ENCODE measurements at regions of chrX and their contacts with region 1.

Region 1: DNA sequence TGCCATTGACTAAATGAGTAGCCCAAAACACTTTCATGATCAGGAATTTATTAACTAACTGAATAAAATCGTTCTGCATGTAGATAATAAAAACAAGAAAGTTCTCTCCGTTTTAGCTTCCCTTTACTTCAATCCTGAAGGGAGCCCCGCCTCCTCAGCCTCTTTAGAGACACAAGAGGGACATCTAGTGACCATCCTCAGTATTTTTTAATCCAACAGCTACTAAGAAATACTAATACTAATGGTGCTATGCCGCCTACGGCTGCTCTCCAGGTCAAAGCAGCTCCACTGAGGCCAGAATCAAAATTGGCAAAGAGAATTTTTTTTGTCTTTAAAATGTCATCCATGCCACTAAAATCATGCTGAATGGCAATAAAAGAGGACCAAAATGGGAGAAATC is 3.2 kb upstream of the PCDH19 start:
- DNase-seq: peak; percentile 61
- H3K4me3 ChIP-seq: no peak overlapping the region
- H3K27ac ChIP-seq: no peak overlapping the region
- H3K4me1 ChIP-seq: peaks cover 13% of the 10 kb centered on the region
- H3K27me3 ChIP-seq: peaks cover 17 to 34% of the 10 kb centered on the region in 2 experiments
- CTCF ChIP-seq: peak in 1 of 2 donors; percentile 26
- POLR2A ChIP-seq: no peak

Region 2: GRCh38 chrX:100368167-100368566 is 45.1 kb before region 1 on chrX:
- CTCF ChIA-PET with region 1: interaction called, 12 read pairs
- POLR2A ChIA-PET with region 1: no interaction called
- dilution Hi-C with region 1: no loop called
- intact Hi-C with region 1: loop called (anchors 5 kb)
- DNase-seq: no peak
- H3K4me3 ChIP-seq: no peak overlapping the region
- H3K27ac ChIP-seq: no peak overlapping the region
- H3K4me1 ChIP-seq: no peaks in the 10 kb centered on the region
- H3K27me3 ChIP-seq: no peaks in the 10 kb centered on the region
- CTCF ChIP-seq: peak in 1 of 2 donors; percentile 5
- POLR2A ChIP-seq: no peak

Region 3: GRCh38 chrX:100435706-100436105 is 22.5 kb after region 1 on chrX:
- CTCF ChIA-PET with region 1: no interaction called
- POLR2A ChIA-PET with region 1: no interaction called
- dilution Hi-C with region 1: no loop called
- intact Hi-C with region 1: no loop called
- DNase-seq: no peak
- H3K4me3 ChIP-seq: no peak overlapping the region
- H3K27ac ChIP-seq: no peak overlapping the region
- H3K4me1 ChIP-seq: no peaks in the 10 kb centered on the region
- H3K27me3 ChIP-seq: no peaks in the 10 kb centered on the region
- CTCF ChIP-seq: no peak
- POLR2A ChIP-seq: no peak

Region 4: DNA sequence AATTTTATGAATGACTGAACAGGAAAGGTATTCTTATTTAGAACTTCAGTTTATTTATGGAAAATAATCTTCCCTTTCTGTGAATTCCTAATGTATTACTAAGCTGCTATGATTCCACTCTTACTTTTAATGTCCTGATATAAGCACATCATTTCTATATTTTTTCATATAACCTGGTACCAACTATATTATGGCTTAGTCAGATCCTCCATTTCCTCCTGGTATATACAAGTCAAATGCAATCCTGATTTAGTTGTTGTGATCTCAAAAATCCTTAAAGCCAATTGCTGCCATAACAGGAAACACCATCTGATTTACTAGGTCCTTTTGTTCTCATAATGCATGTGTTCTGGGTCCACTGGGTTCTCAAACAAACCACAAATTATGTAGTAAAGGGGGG is 611.9 kb after region 1 on chrX:
- CTCF ChIA-PET with region 1: no interaction called
- POLR2A ChIA-PET with region 1: no interaction called
- dilution Hi-C with region 1: no loop called
- intact Hi-C with region 1: no loop called
- DNase-seq: peak; percentile 64
- H3K4me3 ChIP-seq: no peak overlapping the region
- H3K27ac ChIP-seq: peak overlapping the region; percentile 68
- H3K4me1 ChIP-seq: peaks cover 11% of the 10 kb centered on the region
- H3K27me3 ChIP-seq: no peaks in the 10 kb centered on the region
- CTCF ChIP-seq: no peak
- POLR2A ChIP-seq: no peak

Measured in endothelial cell of umbilical vein (primary cell).